ENCODE measurements at regions of chr6 and their contacts with region 1.

Region 1: DNA sequence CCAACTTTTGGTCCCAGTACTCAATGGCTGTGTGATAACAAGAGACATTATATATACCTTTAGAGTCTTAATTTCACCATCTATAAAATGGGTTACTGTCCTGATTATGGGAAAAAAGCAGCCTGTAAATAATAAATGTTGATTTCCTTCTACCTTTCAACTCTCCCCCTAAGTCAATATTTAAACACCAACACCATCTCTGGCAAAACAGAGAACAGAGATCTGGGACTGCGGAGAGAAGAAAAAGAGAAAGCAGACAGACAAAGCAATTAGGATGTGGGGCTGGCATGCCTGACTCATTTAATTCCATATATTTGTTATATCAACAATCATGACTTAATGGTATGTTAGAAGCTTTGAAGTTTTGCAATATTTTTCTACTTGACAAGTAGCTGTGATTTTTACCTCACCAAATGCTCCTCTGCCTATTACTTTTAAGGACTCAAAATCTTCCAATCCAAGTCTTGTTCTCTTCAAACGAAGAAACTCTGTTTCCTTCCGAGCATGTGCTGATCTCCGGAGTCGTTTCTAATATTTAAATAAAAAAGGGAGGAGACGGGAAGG is 23.3 kb downstream of the STK38 start:
- DNase-seq: no peak
- ATAC-seq: no peak
- H3K4me3 ChIP-seq: no peak overlapping the region
- H3K4me3 Mint-ChIP-seq: no peak overlapping the region
- H3K27ac ChIP-seq: no peak overlapping the region
- H3K27ac Mint-ChIP-seq: peak overlapping the region; percentile 55
- H3K4me1 ChIP-seq: peaks cover 32% of the 10 kb centered on the region
- H3K4me1 Mint-ChIP-seq: peaks cover 55% of the 10 kb centered on the region
- H3K27me3 ChIP-seq: no peaks in the 10 kb centered on the region
- H3K27me3 Mint-ChIP-seq: no peaks in the 10 kb centered on the region
- CTCF ChIP-seq: no peak

Region 2: DNA sequence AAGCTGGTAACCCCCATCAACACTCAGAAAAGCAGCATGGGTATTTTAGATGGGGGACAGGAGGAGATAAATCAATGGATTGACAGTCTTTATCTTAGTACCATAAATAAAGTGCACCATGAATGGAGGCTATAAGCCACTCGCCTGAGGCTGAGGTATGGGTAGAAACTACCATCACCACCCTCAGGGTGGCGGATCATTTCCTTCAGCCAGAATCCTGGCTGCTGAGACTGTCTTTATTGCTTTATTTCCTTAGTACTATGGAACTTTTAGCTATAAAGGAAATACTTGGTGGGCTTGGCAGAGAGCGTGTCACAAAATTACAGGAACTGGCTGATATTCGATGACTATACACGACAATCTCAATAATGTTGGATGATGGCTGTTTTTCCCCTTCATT is 28.9 kb before region 1 on chr6:
- CTCF ChIA-PET with region 1: no interaction called
- POLR2A ChIA-PET with region 1: no interaction called
- intact Hi-C with region 1: no loop called
- DNase-seq: no peak
- ATAC-seq: no peak
- H3K4me3 ChIP-seq: no peak overlapping the region
- H3K4me3 Mint-ChIP-seq: no peak overlapping the region
- H3K27ac ChIP-seq: peak overlapping the region in 1 of 2 donors; percentile 6
- H3K27ac Mint-ChIP-seq: peak overlapping the region; percentile 84
- H3K4me1 ChIP-seq: peaks cover 14% of the 10 kb centered on the region
- H3K4me1 Mint-ChIP-seq: peaks cover 53% of the 10 kb centered on the region
- H3K27me3 ChIP-seq: no peaks in the 10 kb centered on the region
- H3K27me3 Mint-ChIP-seq: no peaks in the 10 kb centered on the region
- CTCF ChIP-seq: no peak

Region 3: GRCh38 chr6:36539814-36540568 is 16.0 kb after region 1 on chr6:
- CTCF ChIA-PET with region 1: interaction called, 5 read pairs
- POLR2A ChIA-PET with region 1: interaction called, 7 read pairs
- intact Hi-C with region 1: loop called in 1 of 2 experiments (anchors 2 kb)
- DNase-seq: peak in 3 of 14 experiments; percentile 43 to 72 (median 54)
- ATAC-seq: peak; percentile 77
- H3K4me3 ChIP-seq: peak overlapping the region; percentile 13
- H3K4me3 Mint-ChIP-seq: peak overlapping the region; percentile 68
- H3K27ac ChIP-seq: peak overlapping the region; percentile 54 to 55
- H3K27ac Mint-ChIP-seq: peak overlapping the region; percentile 90
- H3K4me1 ChIP-seq: peaks cover 71% of the 10 kb centered on the region
- H3K4me1 Mint-ChIP-seq: peaks cover 75% of the 10 kb centered on the region
- H3K27me3 ChIP-seq: no peaks in the 10 kb centered on the region
- H3K27me3 Mint-ChIP-seq: no peaks in the 10 kb centered on the region
- CTCF ChIP-seq: no peak

Measured in CD4-positive, alpha-beta T cell (primary cell).